ENCODE measurements at regions of chr2 and their contacts with region 1.

Region 1: DNA sequence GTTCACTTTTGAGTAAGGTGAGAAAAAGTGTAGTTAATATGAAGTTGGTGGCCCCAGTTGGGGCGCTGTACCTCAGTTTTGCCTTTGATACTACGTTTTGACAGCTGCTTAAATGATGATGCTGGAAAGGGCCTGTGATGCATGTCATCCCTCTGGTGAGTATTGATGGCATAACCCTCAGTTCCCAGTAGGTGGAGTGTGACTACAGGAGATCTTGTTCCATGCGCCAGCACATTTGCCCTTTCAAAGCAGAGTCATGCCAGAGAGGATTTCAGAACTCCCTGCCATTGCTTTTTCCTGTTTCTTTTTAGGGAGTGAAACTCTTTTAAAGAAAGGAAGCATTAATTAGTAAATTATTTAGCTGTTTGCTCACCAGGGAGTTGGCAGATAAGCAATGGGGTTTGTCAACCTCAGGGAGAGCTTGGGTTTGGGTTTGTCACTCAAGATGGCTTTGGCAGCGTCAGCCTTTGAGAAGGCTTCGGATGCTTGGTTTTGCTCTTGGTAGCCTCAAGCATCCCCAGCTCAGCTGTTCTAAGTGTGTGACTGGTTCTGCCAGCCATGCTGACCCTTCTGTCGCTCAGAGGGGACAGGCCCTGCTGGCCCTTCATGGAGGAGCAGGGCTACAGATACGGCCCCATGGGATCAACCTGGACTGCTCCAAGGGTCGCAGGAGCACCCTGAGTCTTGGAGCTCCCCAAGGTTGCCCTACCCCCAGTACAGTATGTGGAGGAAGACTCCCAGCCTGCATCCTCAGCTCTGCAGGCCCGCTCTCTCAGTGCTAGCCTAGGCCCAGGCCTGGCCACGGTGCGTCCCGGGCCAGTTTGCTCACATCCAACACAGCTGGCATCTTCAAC is 29.1 kb downstream of the ARMC9 start:
- DNase-seq: peak in 1 of 2 donors; percentile 28
- ATAC-seq: peak; percentile 93 to 99 (median 96)
- H3K4me3 ChIP-seq: no peak overlapping the region
- H3K27ac ChIP-seq: peak overlapping the region; percentile 33
- H3K4me1 ChIP-seq: no peaks in the 10 kb centered on the region
- H3K27me3 ChIP-seq: no peaks in the 10 kb centered on the region
- CTCF ChIP-seq: peak; percentile 78

Region 2: GRCh38 chr2:231181860-231182512 is 45.5 kb before region 1 on chr2:
- intact Hi-C with region 1: no loop called
- DNase-seq: peak; percentile 82 to 90
- ATAC-seq: peak; percentile 88 to 91 (median 90)
- H3K4me3 ChIP-seq: no peak overlapping the region
- H3K27ac ChIP-seq: peak overlapping the region; percentile 83
- H3K4me1 ChIP-seq: peaks cover 31% of the 10 kb centered on the region
- H3K27me3 ChIP-seq: no peaks in the 10 kb centered on the region
- CTCF ChIP-seq: no peak

Region 3: GRCh38 chr2:231270221-231271114 is 42.9 kb after region 1 on chr2:
- intact Hi-C with region 1: no loop called
- DNase-seq: no peak
- ATAC-seq: no peak
- H3K4me3 ChIP-seq: no peak overlapping the region
- H3K27ac ChIP-seq: no peak overlapping the region
- H3K4me1 ChIP-seq: no peaks in the 10 kb centered on the region
- H3K27me3 ChIP-seq: no peaks in the 10 kb centered on the region
- CTCF ChIP-seq: no peak

Region 4: GRCh38 chr2:231297108-231297908 is 69.8 kb after region 1 on chr2:
- intact Hi-C with region 1: no loop called
- DNase-seq: peak; percentile 34 to 64
- ATAC-seq: peak; percentile 45 to 69 (median 50)
- H3K4me3 ChIP-seq: no peak overlapping the region
- H3K27ac ChIP-seq: no peak overlapping the region
- H3K4me1 ChIP-seq: no peaks in the 10 kb centered on the region
- H3K27me3 ChIP-seq: no peaks in the 10 kb centered on the region
- CTCF ChIP-seq: peak; percentile 49

Region 5: GRCh38 chr2:231394211-231395141 is 166.9 kb after region 1 on chr2:
- intact Hi-C with region 1: loop called in 1 of 2 experiments (anchors 10 kb)
- DNase-seq: no peak
- ATAC-seq: no peak
- H3K4me3 ChIP-seq: no peak overlapping the region
- H3K27ac ChIP-seq: no peak overlapping the region
- H3K4me1 ChIP-seq: no peaks in the 10 kb centered on the region
- H3K27me3 ChIP-seq: peaks cover 0 to 23% (median 14%) of the 10 kb centered on the region in 3 donors
- CTCF ChIP-seq: no peak

Region 6: DNA sequence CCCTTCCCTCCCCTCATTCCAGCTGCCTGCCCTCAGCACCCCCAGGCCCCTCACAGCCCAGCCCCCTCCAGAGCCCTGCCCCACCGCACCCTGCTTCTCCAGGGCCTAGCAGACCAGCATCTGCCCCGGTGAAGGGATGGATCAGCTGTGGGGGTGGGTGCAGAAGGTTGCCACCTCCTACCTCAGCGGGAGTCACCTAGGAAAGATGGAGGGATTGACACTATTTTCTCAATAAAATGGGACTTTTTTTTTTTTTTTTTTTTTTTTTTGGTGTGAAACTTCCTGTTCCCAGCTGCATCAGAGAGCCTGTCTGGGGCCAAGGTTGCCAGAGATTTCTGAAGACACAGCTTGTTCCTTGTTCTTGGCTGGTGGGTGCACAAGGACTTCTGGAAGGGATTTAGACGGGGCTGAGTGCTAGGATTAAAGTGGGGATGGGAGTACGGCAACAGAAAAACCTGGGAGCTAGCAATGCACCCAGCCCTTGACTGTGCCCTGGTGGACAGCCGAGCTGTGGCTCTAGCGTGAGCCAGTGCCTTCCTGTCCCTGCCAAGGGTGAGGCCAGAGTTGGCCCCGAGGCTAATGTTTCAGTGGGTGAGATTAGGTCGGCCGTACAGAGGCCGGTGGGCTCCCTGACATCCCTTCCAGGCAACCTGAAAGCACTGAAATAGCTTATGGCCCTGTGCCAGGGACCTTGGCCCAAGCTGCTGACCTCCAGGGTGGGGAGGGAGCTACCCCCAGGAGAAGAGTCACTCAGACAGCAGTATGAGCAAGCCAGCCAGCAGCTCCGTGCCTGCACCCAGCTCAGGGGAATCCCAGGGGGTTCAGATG is 172.5 kb after region 1 on chr2:
- intact Hi-C with region 1: loop called (anchors 2 to 10 kb)
- DNase-seq: peak; percentile 52 to 70
- ATAC-seq: peak; percentile 82 to 96 (median 92)
- H3K4me3 ChIP-seq: no peak overlapping the region
- H3K27ac ChIP-seq: no peak overlapping the region
- H3K4me1 ChIP-seq: peaks cover 5% of the 10 kb centered on the region
- H3K27me3 ChIP-seq: peaks cover 0 to 12% (median 8%) of the 10 kb centered on the region in 3 donors
- CTCF ChIP-seq: peak; percentile 11

Region 7: GRCh38 chr2:231411831-231412617 is 184.5 kb after region 1 on chr2:
- intact Hi-C with region 1: loop called in 1 of 2 experiments (anchors 5 kb)
- DNase-seq: peak; percentile 85 to 86
- ATAC-seq: peak; percentile 92 to 98 (median 97)
- H3K4me3 ChIP-seq: peak overlapping the region; percentile 66
- H3K27ac ChIP-seq: no peak overlapping the region
- H3K4me1 ChIP-seq: peaks cover 6% of the 10 kb centered on the region
- H3K27me3 ChIP-seq: peaks cover 0 to 12% (median 1%) of the 10 kb centered on the region in 3 donors
- CTCF ChIP-seq: peak; percentile 79

Region 8: GRCh38 chr2:231452799-231453508 is 225.4 kb after region 1 on chr2:
- intact Hi-C with region 1: loop called (anchors 2 to 5 kb)
- DNase-seq: no peak
- ATAC-seq: peak; percentile 12 to 28 (median 16)
- H3K4me3 ChIP-seq: no peak overlapping the region
- H3K27ac ChIP-seq: no peak overlapping the region
- H3K4me1 ChIP-seq: no peaks in the 10 kb centered on the region
- H3K27me3 ChIP-seq: no peaks in the 10 kb centered on the region
- CTCF ChIP-seq: no peak